ENCODE measurements at regions of chr10 and their contacts with region 1.

Region 1: DNA sequence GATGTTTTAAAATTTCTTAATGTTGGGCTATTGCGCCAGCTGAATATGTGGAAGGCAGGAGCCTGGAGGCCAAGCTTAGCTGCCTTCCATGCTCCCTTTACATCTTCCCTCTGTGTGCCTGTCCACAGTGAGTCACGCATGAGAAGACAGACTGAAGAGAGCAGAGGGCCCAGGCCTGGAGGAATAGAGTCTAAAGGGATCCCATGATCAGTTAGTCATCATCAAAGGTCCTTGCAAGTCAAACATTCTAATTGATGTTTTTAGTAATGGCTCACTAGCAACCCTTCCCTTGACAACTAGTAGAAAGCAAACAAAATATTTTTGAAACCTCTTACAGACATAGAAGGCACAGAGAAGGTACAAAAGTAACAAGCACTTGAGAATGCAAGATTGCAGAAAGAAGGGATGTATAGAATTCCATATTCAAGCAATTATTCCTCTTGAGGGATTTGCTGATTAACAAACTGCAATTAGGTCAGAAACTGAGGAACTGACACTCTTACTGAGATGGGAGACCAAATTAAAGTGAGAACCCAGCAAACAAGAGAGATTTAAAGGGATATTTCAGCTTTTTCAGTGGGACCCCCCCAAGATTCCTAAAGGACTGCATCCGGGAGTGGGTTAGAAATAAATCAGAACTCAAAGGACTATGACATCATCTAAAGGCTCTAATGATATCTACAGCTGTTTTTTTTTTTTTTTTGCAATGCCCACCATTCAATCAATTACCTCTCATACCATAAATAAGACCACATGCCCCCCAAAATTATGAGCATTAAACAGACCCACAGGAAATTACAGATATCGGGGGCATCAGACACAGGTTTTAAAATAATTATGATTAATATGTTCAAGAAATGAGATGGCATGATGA is 30.5 kb upstream of the APBB1IP start:
- DNase-seq: no peak
- CTCF ChIP-seq: no peak

Region 2: DNA sequence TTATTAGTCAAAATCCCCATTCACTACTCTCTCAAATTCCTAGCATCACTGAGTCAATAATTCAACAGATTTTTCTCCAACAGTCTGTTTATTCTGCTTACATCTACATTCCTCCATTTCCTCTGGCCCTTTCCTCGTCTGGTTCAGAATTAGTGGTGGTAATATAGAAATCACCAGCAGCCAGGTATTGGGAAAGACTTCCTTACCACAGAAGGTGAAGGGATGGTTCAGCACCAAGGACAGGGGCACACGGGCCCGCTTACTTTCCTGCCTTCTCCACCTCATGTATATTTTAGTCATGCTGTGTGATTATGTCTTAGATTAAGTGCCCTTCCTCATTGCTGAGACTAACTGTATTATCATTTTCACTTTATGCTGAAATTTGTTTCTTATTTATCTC is 39.9 kb before region 1 on chr10:
- CTCF ChIA-PET with region 1: no interaction called
- POLR2A ChIA-PET with region 1: interaction called, 10 read pairs
- DNase-seq: peak; percentile 27
- CTCF ChIP-seq: no peak

Region 3: GRCh38 chr10:26430641-26431164 is 23.1 kb after region 1 on chr10:
- CTCF ChIA-PET with region 1: interaction called, 72 read pairs
- POLR2A ChIA-PET with region 1: no interaction called
- DNase-seq: peak; percentile 80
- CTCF ChIP-seq: no peak

Region 4: DNA sequence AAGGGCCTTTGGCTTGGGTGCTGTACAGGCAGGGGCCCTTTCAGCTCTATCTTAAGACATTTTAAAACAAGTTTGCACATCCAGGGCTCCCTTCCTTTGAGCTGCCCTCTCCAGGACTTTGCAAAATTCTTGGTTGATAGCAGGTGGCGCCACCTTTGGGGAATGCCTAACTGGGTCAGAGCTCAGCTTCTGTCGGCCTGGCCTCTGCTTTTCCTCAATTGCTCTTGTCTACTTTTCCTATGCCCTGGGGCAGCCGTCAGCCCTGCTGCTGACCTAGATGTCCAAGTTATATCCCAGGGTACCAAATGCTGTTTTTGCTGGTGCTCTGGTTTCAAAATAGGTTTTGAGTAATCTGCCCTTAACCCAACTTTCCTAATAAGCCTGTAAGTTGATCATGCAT is 96.3 kb after region 1 on chr10:
- CTCF ChIA-PET with region 1: no interaction called
- POLR2A ChIA-PET with region 1: no interaction called
- DNase-seq: no peak
- CTCF ChIP-seq: peak; percentile 26

Measured in GM10248 (cell line).